Ascending aorta (tissue), 2 donors: ENCODE measurements at regions of chr16 and their contacts with region 1.

Region 1: GRCh38 chr16:47037746-47038458 is 64.4 kb upstream of the DNAJA2 start:
- DNase-seq: peak; percentile 56 to 94
- H3K4me3 ChIP-seq: peak overlapping the region; percentile 61 to 74
- H3K27ac ChIP-seq: peak overlapping the region in 1 of 2 donors; percentile 19
- H3K4me1 ChIP-seq: no peaks in the 10 kb centered on the region
- H3K27me3 ChIP-seq: no peaks in the 10 kb centered on the region
- CTCF ChIP-seq: peak; percentile 89 to 96 (median 93)

Region 2: GRCh38 chr16:46973207-46973995 is 64.5 kb before region 1 on chr16 and contains the start of gene DNAJA2:
- intact Hi-C with region 1: loop called (anchors 2 kb)
- DNase-seq: peak; percentile 47 to 94
- H3K4me3 ChIP-seq: peak within 1 kb of the TSS; percentile 87
- H3K27ac ChIP-seq: peak within 1 kb of the TSS; percentile 93 to 96
- H3K4me1 ChIP-seq: peaks cover 10 to 15% of the 10 kb centered on the region in 2 donors
- H3K27me3 ChIP-seq: no peaks in the 10 kb centered on the region
- CTCF ChIP-seq: no peak
- total RNA-seq, gene DNAJA2: 15.8 TPM

Region 3: GRCh38 chr16:47141773-47142485 is 104.0 kb after region 1 on chr16:
- intact Hi-C with region 1: loop called (anchors 5 kb)
- DNase-seq: peak; percentile 35 to 83
- H3K4me3 ChIP-seq: peak overlapping the region; percentile 44 to 77
- H3K27ac ChIP-seq: no peak overlapping the region
- H3K4me1 ChIP-seq: peaks cover 9% of the 10 kb centered on the region in 2 donors
- H3K27me3 ChIP-seq: no peaks in the 10 kb centered on the region
- CTCF ChIP-seq: peak; percentile 73 to 89 (median 78)

Region 4: DNA sequence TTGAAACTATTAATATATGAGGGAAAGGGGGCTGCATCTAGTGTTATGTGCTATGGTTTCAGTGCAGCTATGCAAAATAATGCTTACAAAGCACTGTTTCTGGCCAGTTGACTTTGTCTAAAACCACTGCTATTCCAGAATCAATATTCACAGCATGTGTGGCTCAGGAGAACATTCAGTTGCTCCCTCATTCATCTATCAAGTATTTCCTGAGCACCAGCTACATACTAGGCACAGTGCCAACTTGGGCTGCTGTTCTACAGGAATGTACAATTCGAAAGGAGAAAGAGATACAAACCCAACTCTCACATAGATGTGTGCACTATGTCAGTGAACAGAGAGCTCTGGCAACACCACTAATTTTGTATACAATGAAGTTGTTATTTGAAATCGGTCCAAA is 606.3 kb after region 1 on chr16:
- intact Hi-C with region 1: loop called (anchors 10 kb)
- DNase-seq: peak in 1 of 2 donors; percentile 76
- H3K4me3 ChIP-seq: no peak overlapping the region
- H3K27ac ChIP-seq: no peak overlapping the region
- H3K4me1 ChIP-seq: peaks cover 0 to 16% of the 10 kb centered on the region in 2 donors
- H3K27me3 ChIP-seq: no peaks in the 10 kb centered on the region
- CTCF ChIP-seq: no peak

Region 5: GRCh38 chr16:48164907-48165726 is 1127.2 kb after region 1 on chr16:
- intact Hi-C with region 1: loop called (anchors 2 kb)
- DNase-seq: peak; percentile 23 to 84
- H3K4me3 ChIP-seq: no peak overlapping the region
- H3K27ac ChIP-seq: no peak overlapping the region
- H3K4me1 ChIP-seq: peaks cover 0 to 3% of the 10 kb centered on the region in 2 donors
- H3K27me3 ChIP-seq: no peaks in the 10 kb centered on the region
- CTCF ChIP-seq: peak; percentile 69 to 85 (median 76)